ENCODE measurements at regions of chr22 and their contacts with region 1.

Region 1: DNA sequence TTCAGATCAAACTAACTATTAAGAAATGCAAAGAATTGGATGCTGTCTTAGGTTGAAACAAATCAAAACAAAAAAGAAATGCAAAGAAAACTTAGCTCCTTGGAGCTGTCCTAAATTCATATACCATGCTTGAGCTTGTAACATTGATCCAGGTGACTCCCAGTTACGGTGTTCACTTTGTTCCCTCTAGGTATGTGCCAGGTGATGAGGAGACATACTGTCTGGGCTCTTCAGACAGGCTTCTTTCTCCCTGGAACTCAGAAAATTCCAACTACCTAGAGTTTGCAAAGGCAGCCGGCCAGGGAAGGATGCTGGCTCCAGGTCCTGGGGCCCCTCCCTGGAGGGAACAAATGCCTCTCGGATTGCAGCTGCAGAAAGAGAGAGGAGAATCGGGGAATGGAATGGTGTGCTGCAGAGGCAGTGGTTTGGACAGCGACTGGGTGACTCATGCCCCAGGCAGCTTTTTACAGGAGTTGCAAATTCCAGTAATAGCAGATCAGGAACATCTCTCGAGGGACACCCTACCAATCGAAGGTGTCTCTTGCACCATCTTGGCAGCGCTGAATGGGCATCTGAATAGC is 12.3 kb upstream of the ASPHD2 start:
- DNase-seq: peak; percentile 71
- H3K4me3 ChIP-seq: peak overlapping the region in 1 of 3 experiments; percentile 15
- H3K27ac ChIP-seq: no peak overlapping the region
- H3K4me1 ChIP-seq: peaks cover 23% of the 10 kb centered on the region
- H3K27me3 ChIP-seq: peaks cover 1% of the 10 kb centered on the region
- CTCF ChIP-seq: no peak

Region 2: GRCh38 chr22:26342745-26343410 is 73.9 kb before region 1 on chr22:
- CTCF ChIA-PET with region 1: no interaction called
- dilution Hi-C with region 1: no loop called
- in situ Hi-C with region 1: no loop called
- intact Hi-C with region 1: no loop called
- DNase-seq: no peak
- H3K4me3 ChIP-seq: no peak overlapping the region
- H3K27ac ChIP-seq: no peak overlapping the region
- H3K4me1 ChIP-seq: no peaks in the 10 kb centered on the region
- H3K27me3 ChIP-seq: peaks cover 2% of the 10 kb centered on the region
- CTCF ChIP-seq: no peak

Region 3: DNA sequence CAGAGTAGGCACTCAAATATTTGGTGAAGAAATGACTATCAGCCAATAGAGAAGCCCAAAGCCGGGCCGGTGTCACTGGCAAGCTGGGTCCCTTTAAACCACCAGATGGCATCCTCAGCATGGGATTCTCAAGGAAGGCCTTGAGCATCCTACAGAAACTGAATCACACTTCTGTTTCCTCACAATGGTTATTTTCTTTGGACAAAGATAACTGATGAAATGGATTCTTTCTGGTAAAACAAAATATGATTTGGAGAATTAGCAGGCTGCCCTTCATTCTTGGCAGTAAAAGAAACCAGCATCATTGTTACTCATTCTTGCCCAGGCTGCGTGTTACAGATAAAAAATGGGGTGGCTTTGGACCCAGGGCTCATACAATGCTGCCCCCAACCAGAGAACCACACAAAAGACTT is 18.0 kb before region 1 on chr22:
- CTCF ChIA-PET with region 1: no interaction called
- dilution Hi-C with region 1: no loop called
- in situ Hi-C with region 1: no loop called
- intact Hi-C with region 1: loop called (anchors 2 kb)
- DNase-seq: peak; percentile 55
- H3K4me3 ChIP-seq: no peak overlapping the region
- H3K27ac ChIP-seq: no peak overlapping the region
- H3K4me1 ChIP-seq: no peaks in the 10 kb centered on the region
- H3K27me3 ChIP-seq: no peaks in the 10 kb centered on the region
- CTCF ChIP-seq: peak; percentile 84

Region 4: GRCh38 chr22:26502688-26503561 is 86.2 kb after region 1 on chr22:
- CTCF ChIA-PET with region 1: no interaction called
- dilution Hi-C with region 1: loop called (anchors 10 kb)
- in situ Hi-C with region 1: no loop called
- intact Hi-C with region 1: no loop called
- DNase-seq: peak; percentile 20
- H3K4me3 ChIP-seq: no peak overlapping the region
- H3K27ac ChIP-seq: no peak overlapping the region
- H3K4me1 ChIP-seq: no peaks in the 10 kb centered on the region
- H3K27me3 ChIP-seq: no peaks in the 10 kb centered on the region
- CTCF ChIP-seq: peak; percentile 47 to 63

Region 5: GRCh38 chr22:26563022-26563421 is 146.3 kb after region 1 on chr22:
- CTCF ChIA-PET with region 1: interaction called, 12 read pairs
- dilution Hi-C with region 1: no loop called
- in situ Hi-C with region 1: no loop called
- intact Hi-C with region 1: no loop called
- DNase-seq: no peak
- H3K4me3 ChIP-seq: no peak overlapping the region
- H3K27ac ChIP-seq: no peak overlapping the region
- H3K4me1 ChIP-seq: peaks cover 36% of the 10 kb centered on the region
- H3K27me3 ChIP-seq: no peaks in the 10 kb centered on the region
- CTCF ChIP-seq: peak in 1 of 2 donors; percentile 33